CD4-positive, alpha-beta T cell (primary cell): ENCODE measurements at regions of chr6 and their contacts with region 1.

Region 1: DNA sequence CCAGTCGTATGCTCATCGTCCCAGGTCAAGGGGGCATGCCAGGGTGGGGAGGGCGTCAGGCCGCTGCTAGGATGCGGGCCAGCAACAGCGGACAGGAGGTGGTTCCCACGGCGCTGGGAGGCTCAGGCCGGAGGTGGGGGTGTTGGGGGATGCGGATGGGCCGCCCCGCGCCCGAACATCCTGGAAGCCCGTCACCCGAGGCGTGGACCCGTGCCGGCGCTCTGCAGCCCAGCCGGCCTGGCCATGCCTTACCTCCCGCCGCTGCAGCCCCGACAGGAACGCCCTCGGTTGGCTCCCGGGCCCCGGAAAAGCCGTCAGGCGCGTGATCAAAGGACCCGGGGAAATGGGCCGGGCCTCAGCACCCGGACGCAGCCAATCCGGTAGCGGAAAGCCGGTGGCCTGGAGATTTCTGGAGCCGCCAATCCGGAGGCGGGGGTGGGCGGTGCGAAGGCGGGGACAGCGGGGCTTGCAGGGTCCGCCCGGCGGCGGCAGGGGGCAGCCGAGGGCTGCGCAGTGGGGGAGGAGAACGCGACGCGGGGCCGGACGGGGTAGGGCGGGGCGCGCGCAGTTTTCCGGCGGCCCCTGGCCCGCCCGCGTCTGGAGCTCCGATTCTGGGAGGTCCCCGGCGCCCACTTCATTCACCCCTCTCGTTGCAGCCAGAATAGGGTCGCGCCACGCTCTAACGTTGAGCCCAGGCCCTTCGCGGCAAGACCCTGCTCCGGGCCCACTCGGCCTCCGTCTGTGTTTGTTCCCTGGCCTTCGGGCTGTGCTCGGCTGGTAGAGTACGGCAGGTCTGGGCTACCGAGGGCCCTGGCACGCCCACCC is at the start of gene SMIM29:
- DNase-seq: peak; percentile 94 to 99 (median 97)
- ATAC-seq: peak; percentile 90
- H3K4me3 ChIP-seq: peak within 1 kb of the TSS; percentile 96
- H3K4me3 Mint-ChIP-seq: peak within 1 kb of the TSS; percentile 97
- H3K27ac ChIP-seq: peak within 1 kb of the TSS; percentile 89 to 96
- H3K27ac Mint-ChIP-seq: peak within 1 kb of the TSS; percentile 91
- H3K4me1 ChIP-seq: peaks cover 44% of the 10 kb centered on the region
- H3K4me1 Mint-ChIP-seq: peaks cover 28% of the 10 kb centered on the region
- H3K27me3 ChIP-seq: no peaks in the 10 kb centered on the region
- H3K27me3 Mint-ChIP-seq: no peaks in the 10 kb centered on the region
- CTCF ChIP-seq: peak; percentile 89
- total RNA-seq, gene SMIM29: 22.0 to 23.9 TPM

Region 2: GRCh38 chr6:32843979-32844838 is 1404.7 kb before region 1 on chr6 and contains the start of gene PSMB8:
- CTCF ChIA-PET with region 1: no interaction called
- POLR2A ChIA-PET with region 1: no interaction called
- intact Hi-C with region 1: loop called in 1 of 2 experiments (anchors 10 kb)
- DNase-seq: peak; percentile 94 to 99 (median 98)
- ATAC-seq: peak; percentile 79
- H3K4me3 ChIP-seq: peak within 1 kb of the TSS; percentile 94
- H3K4me3 Mint-ChIP-seq: peak within 1 kb of the TSS; percentile 97
- H3K27ac ChIP-seq: peak within 1 kb of the TSS; percentile 99 to 100
- H3K27ac Mint-ChIP-seq: peak within 1 kb of the TSS; percentile 99
- H3K4me1 ChIP-seq: peaks cover 73% of the 10 kb centered on the region
- H3K4me1 Mint-ChIP-seq: peaks cover 96% of the 10 kb centered on the region
- H3K27me3 ChIP-seq: no peaks in the 10 kb centered on the region
- H3K27me3 Mint-ChIP-seq: no peaks in the 10 kb centered on the region
- CTCF ChIP-seq: no peak
- total RNA-seq, gene PSMB8: 120 to 121 TPM

Region 3: GRCh38 chr6:34196126-34196830 is 52.7 kb before region 1 on chr6:
- CTCF ChIA-PET with region 1: interaction called, 38 read pairs
- POLR2A ChIA-PET with region 1: interaction called, 8 read pairs
- intact Hi-C with region 1: loop called (anchors 1 to 2 kb)
- DNase-seq: peak; percentile 79 to 96 (median 90)
- ATAC-seq: peak; percentile 99
- H3K4me3 ChIP-seq: peak overlapping the region; percentile 64
- H3K4me3 Mint-ChIP-seq: peak overlapping the region; percentile 86
- H3K27ac ChIP-seq: no peak overlapping the region
- H3K27ac Mint-ChIP-seq: no peak overlapping the region
- H3K4me1 ChIP-seq: peaks cover 12% of the 10 kb centered on the region
- H3K4me1 Mint-ChIP-seq: peaks cover 7% of the 10 kb centered on the region
- H3K27me3 ChIP-seq: no peaks in the 10 kb centered on the region
- H3K27me3 Mint-ChIP-seq: no peaks in the 10 kb centered on the region
- CTCF ChIP-seq: peak; percentile 98

Region 4: DNA sequence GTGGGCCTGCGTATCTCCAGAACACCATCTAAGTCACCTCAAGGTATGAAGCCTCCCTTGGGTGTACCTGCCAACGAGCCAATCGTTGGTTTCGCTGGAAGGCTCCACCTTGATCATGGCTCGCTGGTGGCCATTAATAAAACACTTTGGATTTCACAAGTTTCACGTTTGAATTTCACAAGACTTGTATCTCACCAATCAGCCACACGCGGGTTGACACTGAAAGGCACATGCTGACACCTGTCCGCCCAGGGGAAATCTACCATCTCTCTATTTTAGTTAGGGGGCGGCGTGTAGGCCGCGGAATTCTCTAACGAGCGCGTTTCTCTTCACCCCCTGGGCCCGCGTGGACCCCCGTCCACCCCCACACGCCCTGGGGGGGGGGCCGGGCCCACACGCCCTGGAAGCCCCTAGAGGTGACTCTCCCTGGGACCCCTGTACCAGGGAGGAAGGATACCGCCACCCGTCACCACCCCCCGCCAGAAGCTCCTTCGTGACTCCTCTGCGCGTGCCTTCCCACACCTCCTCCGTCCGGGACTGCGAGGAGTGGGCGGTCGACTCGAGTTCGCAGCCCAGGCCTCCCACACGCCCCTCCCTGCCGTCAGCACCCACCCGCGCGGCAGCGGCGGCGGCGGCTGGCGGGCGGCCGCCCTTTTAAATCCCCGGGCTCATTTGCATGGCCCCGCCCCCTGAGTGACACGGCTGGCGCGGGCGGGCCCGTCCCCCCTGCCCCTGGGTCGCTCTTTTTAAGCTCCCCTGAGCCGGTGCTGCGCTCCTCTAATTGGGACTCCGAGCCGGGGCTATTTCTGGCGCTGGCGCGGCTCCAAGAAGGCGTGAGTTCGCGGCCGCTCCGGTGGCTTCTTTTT is 12.6 kb before region 1 on chr6 and contains the start of gene HMGA1:
- CTCF ChIA-PET with region 1: interaction called, 12 read pairs
- POLR2A ChIA-PET with region 1: interaction called, 80 read pairs
- intact Hi-C with region 1: loop called (anchors 1 kb)
- DNase-seq: peak; percentile 84 to 96 (median 89)
- ATAC-seq: peak; percentile 71
- H3K4me3 ChIP-seq: peak within 1 kb of the TSS; percentile 90
- H3K4me3 Mint-ChIP-seq: peak within 1 kb of the TSS; percentile 97
- H3K27ac ChIP-seq: peak within 1 kb of the TSS; percentile 97 to 99
- H3K27ac Mint-ChIP-seq: peak within 1 kb of the TSS; percentile 99
- H3K4me1 ChIP-seq: peaks cover 39% of the 10 kb centered on the region
- H3K4me1 Mint-ChIP-seq: peaks cover 35% of the 10 kb centered on the region
- H3K27me3 ChIP-seq: no peaks in the 10 kb centered on the region
- H3K27me3 Mint-ChIP-seq: no peaks in the 10 kb centered on the region
- CTCF ChIP-seq: no peak
- total RNA-seq, gene HMGA1: 102 to 107 TPM

Region 5: GRCh38 chr6:34370361-34370760 is 121.4 kb after region 1 on chr6:
- CTCF ChIA-PET with region 1: no interaction called
- POLR2A ChIA-PET with region 1: no interaction called
- intact Hi-C with region 1: no loop called
- DNase-seq: no peak
- ATAC-seq: no peak
- H3K4me3 ChIP-seq: no peak overlapping the region
- H3K4me3 Mint-ChIP-seq: no peak overlapping the region
- H3K27ac ChIP-seq: no peak overlapping the region
- H3K27ac Mint-ChIP-seq: no peak overlapping the region
- H3K4me1 ChIP-seq: peaks cover 6% of the 10 kb centered on the region
- H3K4me1 Mint-ChIP-seq: peaks cover 39% of the 10 kb centered on the region
- H3K27me3 ChIP-seq: no peaks in the 10 kb centered on the region
- H3K27me3 Mint-ChIP-seq: no peaks in the 10 kb centered on the region
- CTCF ChIP-seq: no peak

Region 6: GRCh38 chr6:34414999-34415858 is 166.3 kb after region 1 on chr6:
- CTCF ChIA-PET with region 1: interaction called, 46 read pairs
- POLR2A ChIA-PET with region 1: interaction called, 26 read pairs
- intact Hi-C with region 1: loop called (anchors 1 to 2 kb)
- DNase-seq: peak in 10 of 14 experiments; percentile 9 to 76 (median 38)
- ATAC-seq: peak; percentile 85
- H3K4me3 ChIP-seq: no peak overlapping the region
- H3K4me3 Mint-ChIP-seq: no peak overlapping the region
- H3K27ac ChIP-seq: no peak overlapping the region
- H3K27ac Mint-ChIP-seq: peak overlapping the region; percentile 38
- H3K4me1 ChIP-seq: no peaks in the 10 kb centered on the region
- H3K4me1 Mint-ChIP-seq: peaks cover 22% of the 10 kb centered on the region
- H3K27me3 ChIP-seq: no peaks in the 10 kb centered on the region
- H3K27me3 Mint-ChIP-seq: no peaks in the 10 kb centered on the region
- CTCF ChIP-seq: peak; percentile 64

Region 7: DNA sequence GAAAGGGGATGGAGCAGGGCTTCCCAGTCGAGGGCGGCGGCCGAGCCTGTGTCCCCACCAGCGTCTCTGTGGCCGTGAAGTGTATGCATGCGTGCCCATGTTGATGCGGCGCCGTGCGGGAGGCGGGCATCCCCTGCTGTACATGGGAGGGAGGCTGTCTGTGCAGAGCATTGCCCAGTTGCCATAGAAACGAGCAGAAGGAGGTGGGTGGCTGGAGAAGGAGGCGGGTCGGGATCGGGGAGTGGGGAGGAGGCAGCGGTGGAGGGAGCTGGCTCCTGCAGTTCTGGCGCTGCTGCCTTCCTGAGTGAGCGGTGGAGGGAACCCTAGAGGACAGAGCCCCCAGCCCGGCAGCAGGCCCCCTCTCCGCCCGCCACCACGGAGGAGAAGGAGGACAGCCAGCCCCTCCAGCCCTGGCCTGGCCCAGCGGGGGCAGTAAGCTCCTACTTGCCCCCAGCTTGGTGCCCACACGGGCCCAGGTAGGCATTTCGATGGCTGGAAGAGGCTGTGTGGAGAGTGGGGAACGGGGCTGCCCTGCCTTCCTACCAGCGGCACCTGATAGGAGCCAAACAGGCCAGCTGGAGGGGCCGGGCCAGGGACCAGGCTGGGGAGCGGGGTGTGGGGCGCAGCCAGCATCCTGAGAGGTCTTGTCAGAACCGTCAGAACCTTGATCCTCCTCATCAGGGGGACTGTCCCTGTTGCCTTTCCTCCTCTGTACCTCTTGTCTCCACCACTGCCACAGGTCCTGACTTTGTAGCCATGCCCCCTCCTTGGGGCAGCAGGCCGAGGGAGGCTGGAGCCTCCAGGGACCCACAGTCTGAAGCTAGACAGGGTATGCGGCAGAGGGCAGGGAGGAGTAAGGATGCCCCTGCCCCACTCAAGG is 265.9 kb after region 1 on chr6:
- CTCF ChIA-PET with region 1: no interaction called
- POLR2A ChIA-PET with region 1: no interaction called
- intact Hi-C with region 1: no loop called
- DNase-seq: peak in 1 of 14 experiments; percentile 7
- ATAC-seq: no peak
- H3K4me3 ChIP-seq: no peak overlapping the region
- H3K4me3 Mint-ChIP-seq: no peak overlapping the region
- H3K27ac ChIP-seq: no peak overlapping the region
- H3K27ac Mint-ChIP-seq: no peak overlapping the region
- H3K4me1 ChIP-seq: no peaks in the 10 kb centered on the region
- H3K4me1 Mint-ChIP-seq: no peaks in the 10 kb centered on the region
- H3K27me3 ChIP-seq: peaks cover 0 to 2% of the 10 kb centered on the region in 2 experiments
- H3K27me3 Mint-ChIP-seq: peaks cover 6% of the 10 kb centered on the region
- CTCF ChIP-seq: no peak

Region 8: DNA sequence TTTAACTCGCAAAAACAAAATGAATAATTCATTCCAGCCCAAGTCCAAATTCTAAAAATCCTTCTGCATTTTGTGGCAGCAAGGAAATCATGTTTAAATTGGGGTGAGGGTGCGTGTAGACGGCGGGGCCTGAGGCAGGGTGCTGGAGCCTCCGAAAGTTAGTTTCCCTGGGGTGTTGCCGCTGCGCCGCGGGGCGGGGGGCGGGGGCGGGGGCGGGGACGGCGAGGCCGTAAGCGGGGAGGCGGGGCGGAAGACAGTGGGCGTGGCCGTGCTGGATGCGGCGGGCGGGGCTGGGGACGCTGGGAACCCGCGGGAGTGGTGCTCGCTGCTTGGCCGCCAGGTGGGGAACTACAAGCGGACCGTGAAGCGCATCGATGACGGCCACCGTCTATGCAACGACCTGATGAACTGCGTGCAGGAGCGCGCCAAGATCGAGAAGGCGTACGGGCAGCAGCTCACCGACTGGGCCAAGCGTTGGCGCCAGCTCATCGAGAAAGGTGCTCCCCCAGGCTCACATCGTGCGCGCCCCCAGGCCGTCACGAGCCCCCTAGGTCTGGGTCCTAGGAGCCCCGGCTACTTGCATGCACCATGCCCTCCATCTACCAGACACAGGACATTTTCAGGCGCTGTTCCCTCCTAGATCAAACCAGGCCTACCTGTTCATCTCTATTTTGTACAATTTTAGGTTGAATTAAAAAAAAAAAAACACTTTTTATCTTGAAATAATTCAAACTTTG is 278.2 kb after region 1 on chr6:
- CTCF ChIA-PET with region 1: interaction called, 3 read pairs
- POLR2A ChIA-PET with region 1: no interaction called
- intact Hi-C with region 1: loop called in 1 of 2 experiments (anchors 5 kb)
- DNase-seq: peak; percentile 94 to 99 (median 97)
- ATAC-seq: peak; percentile 98
- H3K4me3 ChIP-seq: peak overlapping the region; percentile 26
- H3K4me3 Mint-ChIP-seq: peak overlapping the region; percentile 54
- H3K27ac ChIP-seq: no peak overlapping the region
- H3K27ac Mint-ChIP-seq: peak overlapping the region; percentile 75
- H3K4me1 ChIP-seq: peaks cover 15% of the 10 kb centered on the region
- H3K4me1 Mint-ChIP-seq: peaks cover 11% of the 10 kb centered on the region
- H3K27me3 ChIP-seq: no peaks in the 10 kb centered on the region
- H3K27me3 Mint-ChIP-seq: no peaks in the 10 kb centered on the region
- CTCF ChIP-seq: peak; percentile 78

Region 9: DNA sequence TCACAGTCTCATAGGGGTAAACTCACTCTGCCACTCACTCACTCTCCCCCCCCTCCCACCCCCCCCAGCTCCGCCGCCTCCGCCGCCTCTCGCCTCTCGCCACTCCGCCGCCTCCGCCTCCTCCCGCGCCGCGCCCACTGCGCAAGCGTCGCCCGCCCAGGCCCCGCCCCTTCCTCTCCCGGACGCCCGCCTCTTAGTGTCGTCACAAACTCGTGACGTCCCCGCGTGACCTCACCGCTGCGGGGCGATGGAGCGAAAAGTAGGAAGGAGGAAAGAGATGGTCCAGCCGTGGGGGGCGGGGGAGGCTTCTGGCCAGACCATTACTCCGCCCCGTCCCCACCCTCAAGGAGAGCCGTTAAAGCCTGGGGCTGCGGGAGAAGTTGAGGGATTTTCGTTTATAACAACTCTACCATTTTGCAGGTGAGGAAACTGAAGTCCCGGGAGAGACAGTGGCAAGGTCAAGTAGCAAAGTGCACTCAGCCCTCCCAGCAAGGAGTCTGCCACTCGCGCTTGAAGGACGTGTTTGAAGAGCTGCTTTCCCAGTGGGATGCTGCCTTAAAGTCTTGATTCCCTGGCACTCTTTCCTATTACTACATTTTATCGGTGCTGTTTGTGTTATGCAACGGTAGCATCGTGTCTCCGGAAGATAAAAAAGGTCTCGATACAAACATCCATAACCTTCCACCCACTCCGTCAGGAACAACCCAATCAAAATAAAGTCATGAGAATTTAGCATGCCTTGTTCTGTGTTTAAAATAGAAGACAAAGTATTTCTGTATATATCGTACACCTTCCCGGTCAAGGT is 448.0 kb after region 1 on chr6 and contains the start of gene ILRUN:
- CTCF ChIA-PET with region 1: no interaction called
- POLR2A ChIA-PET with region 1: no interaction called
- intact Hi-C with region 1: loop called in 1 of 2 experiments (anchors 5 kb)
- DNase-seq: peak; percentile 94 to 98 (median 96)
- ATAC-seq: peak; percentile 85
- H3K4me3 ChIP-seq: peak within 1 kb of the TSS; percentile 99
- H3K4me3 Mint-ChIP-seq: peak within 1 kb of the TSS; percentile 98
- H3K27ac ChIP-seq: peak within 1 kb of the TSS; percentile 80 to 87
- H3K27ac Mint-ChIP-seq: peak within 1 kb of the TSS; percentile 98
- H3K4me1 ChIP-seq: peaks cover 33% of the 10 kb centered on the region
- H3K4me1 Mint-ChIP-seq: peaks cover 53% of the 10 kb centered on the region
- H3K27me3 ChIP-seq: no peaks in the 10 kb centered on the region
- H3K27me3 Mint-ChIP-seq: no peaks in the 10 kb centered on the region
- CTCF ChIP-seq: no peak
- total RNA-seq, gene ILRUN: 44.9 to 49.4 TPM